ENCODE measurements at regions of chr6 and their contacts with region 1.

Region 1: DNA sequence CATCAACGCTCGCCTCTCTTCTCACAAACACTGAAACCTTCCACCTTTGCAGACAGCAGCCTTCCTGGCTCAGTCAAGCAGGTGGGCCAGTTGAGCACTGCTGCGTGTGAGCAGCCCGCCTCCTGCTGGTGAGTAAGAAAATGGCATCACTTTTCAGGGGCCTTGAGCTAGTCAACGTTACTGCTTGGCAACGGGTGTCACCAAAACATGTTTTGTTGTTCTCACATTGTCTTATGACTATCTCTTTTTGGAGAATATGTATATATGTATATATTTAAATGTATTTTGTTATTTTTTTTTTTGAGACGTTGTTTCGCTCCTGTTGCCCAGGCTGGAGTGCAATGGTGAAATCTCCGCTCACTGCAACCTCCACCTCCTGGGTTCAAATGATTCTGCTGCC is 97.0 kb upstream of the AGPAT4 start:
- H3K4me3 ChIP-seq: no peak overlapping the region
- H3K27ac ChIP-seq: no peak overlapping the region
- H3K4me1 ChIP-seq: no peaks in the 10 kb centered on the region
- CTCF ChIP-seq: peak; percentile 78

Region 2: GRCh38 chr6:160733050-160733646 is 637.7 kb before region 1 on chr6:
- CTCF ChIA-PET with region 1: interaction called, 49 read pairs
- POLR2A ChIA-PET with region 1: no interaction called
- H3K4me3 ChIP-seq: no peak overlapping the region
- H3K27ac ChIP-seq: no peak overlapping the region
- H3K4me1 ChIP-seq: no peaks in the 10 kb centered on the region
- CTCF ChIP-seq: no peak

Region 3: DNA sequence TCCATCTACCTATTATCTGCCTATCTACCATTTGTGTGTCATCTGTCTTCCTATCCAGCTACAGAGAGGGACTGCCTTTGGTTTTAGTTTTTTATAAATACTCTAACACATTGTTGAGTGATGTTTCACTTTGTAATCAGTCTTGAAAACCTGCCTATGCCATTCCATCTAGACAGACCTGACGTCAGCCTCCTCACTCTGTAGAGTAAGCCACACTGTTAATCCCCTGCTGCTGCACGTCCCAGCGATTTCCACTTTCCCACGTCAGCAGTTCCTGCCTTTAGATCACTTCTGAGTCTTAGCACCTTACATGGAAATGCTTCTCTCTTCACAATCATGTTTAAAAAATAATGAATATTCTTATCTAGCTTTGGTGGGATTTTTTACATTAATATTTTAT is 614.0 kb before region 1 on chr6:
- CTCF ChIA-PET with region 1: interaction called, 59 read pairs
- POLR2A ChIA-PET with region 1: interaction called, 4 read pairs
- H3K4me3 ChIP-seq: no peak overlapping the region
- H3K27ac ChIP-seq: no peak overlapping the region
- H3K4me1 ChIP-seq: no peaks in the 10 kb centered on the region
- CTCF ChIP-seq: no peak

Region 4: DNA sequence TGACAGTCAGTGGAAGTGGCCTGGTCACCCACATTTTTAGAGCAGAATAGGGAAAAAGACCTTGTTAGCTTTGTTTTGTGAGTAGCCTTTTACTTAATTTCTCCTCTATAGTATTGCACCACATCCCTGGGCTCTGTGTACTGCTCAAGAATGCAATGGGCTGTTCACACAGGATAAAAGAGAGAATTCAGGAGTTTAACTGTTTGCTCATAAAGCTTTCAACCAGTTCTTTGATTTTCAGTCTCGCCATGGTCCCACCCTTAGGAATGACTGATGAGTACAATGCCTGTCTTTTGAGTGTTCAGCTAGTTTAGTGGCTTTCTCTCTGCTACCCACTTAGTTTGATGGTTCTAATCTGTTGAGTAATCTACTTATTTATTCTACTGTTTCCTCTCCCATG is 539.1 kb before region 1 on chr6:
- CTCF ChIA-PET with region 1: no interaction called
- POLR2A ChIA-PET with region 1: no interaction called
- H3K4me3 ChIP-seq: no peak overlapping the region
- H3K27ac ChIP-seq: no peak overlapping the region
- H3K4me1 ChIP-seq: no peaks in the 10 kb centered on the region
- CTCF ChIP-seq: no peak

Region 5: GRCh38 chr6:160919723-160920440 is 451.0 kb before region 1 on chr6:
- CTCF ChIA-PET with region 1: interaction called, 14 read pairs
- POLR2A ChIA-PET with region 1: no interaction called
- H3K4me3 ChIP-seq: no peak overlapping the region
- H3K27ac ChIP-seq: no peak overlapping the region
- H3K4me1 ChIP-seq: no peaks in the 10 kb centered on the region
- CTCF ChIP-seq: no peak

Region 6: GRCh38 chr6:161101517-161101916 is 269.4 kb before region 1 on chr6:
- CTCF ChIA-PET with region 1: interaction called, 31 read pairs
- POLR2A ChIA-PET with region 1: no interaction called
- H3K4me3 ChIP-seq: no peak overlapping the region
- H3K27ac ChIP-seq: no peak overlapping the region
- H3K4me1 ChIP-seq: no peaks in the 10 kb centered on the region
- CTCF ChIP-seq: no peak

Region 7: DNA sequence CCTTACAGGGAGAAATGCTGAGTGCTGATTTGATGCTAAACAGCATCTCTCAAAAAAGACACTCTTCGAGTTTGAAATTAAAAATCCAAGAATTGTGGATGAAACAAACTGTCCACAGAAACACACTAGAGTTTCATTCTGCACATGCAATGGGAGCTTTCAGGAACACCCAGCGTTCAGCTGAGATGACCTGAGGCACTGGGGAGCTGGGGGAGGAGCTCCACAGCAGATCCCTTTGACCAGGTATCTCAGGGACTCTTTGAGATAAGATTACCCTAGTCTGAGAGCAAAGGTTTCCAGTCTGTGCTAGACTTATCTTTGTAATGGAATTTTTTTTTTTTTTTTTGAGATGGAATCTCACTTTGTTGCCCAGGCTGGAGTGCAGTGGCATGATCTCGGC is 26.3 kb before region 1 on chr6:
- CTCF ChIA-PET with region 1: interaction called, 11 read pairs
- POLR2A ChIA-PET with region 1: no interaction called
- H3K4me3 ChIP-seq: no peak overlapping the region
- H3K27ac ChIP-seq: no peak overlapping the region
- H3K4me1 ChIP-seq: no peaks in the 10 kb centered on the region
- CTCF ChIP-seq: no peak

Region 8: GRCh38 chr6:161736781-161737292 is 366.0 kb after region 1 on chr6:
- CTCF ChIA-PET with region 1: no interaction called
- POLR2A ChIA-PET with region 1: no interaction called
- H3K4me3 ChIP-seq: no peak overlapping the region
- H3K27ac ChIP-seq: no peak overlapping the region
- H3K4me1 ChIP-seq: no peaks in the 10 kb centered on the region
- CTCF ChIP-seq: no peak